ENCODE measurements at regions of chr3 and their contacts with region 1.

Region 1: DNA sequence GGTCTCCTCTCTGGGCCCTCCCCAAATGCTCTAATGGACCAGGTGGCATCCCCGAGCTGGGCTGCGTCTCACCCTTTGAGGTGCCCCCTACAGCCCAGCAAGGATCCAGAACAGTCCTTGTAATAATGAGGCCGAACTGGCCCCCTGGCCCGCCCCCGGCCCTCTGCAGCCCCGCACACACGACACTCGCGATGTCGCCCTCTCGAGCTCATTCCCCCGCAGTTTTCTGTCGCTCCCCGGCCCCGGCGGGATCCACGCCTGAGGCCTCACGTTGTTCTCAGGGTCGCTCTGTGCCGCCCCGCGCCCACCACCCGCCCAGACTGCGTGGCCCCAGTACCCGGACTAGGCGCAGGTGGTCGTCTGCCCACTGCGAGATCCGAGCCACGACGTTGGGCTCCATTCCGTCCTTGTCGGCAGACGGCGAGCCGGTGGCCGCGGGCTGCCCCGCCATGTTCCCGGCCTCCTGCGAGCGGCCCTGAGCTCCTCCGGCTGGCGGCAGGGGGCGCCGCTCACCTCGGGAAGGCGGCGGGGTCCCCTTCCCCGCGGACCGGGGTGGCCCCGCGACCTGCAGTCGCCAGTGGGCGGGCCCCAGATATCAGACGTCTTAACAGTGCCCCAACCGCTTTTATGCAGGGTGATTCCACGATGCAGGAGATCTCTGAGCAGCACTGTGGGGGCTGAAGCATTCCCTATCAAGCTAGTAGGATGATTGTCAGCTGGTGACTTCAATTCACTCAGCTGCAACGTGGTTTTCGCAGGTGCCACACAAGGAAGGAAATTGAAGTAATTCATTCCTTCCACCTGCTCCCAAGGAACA is at the start of gene C3orf33:
- DNase-seq: peak; percentile 75
- H3K4me3 Mint-ChIP-seq: peak within 1 kb of the TSS; percentile 81
- H3K27ac Mint-ChIP-seq: peak within 1 kb of the TSS; percentile 15
- H3K4me1 Mint-ChIP-seq: peaks cover 10% of the 10 kb centered on the region
- H3K27me3 Mint-ChIP-seq: peaks cover 14% of the 10 kb centered on the region
- total RNA-seq, gene C3orf33: 0.48 to 0.86 TPM

Region 2: DNA sequence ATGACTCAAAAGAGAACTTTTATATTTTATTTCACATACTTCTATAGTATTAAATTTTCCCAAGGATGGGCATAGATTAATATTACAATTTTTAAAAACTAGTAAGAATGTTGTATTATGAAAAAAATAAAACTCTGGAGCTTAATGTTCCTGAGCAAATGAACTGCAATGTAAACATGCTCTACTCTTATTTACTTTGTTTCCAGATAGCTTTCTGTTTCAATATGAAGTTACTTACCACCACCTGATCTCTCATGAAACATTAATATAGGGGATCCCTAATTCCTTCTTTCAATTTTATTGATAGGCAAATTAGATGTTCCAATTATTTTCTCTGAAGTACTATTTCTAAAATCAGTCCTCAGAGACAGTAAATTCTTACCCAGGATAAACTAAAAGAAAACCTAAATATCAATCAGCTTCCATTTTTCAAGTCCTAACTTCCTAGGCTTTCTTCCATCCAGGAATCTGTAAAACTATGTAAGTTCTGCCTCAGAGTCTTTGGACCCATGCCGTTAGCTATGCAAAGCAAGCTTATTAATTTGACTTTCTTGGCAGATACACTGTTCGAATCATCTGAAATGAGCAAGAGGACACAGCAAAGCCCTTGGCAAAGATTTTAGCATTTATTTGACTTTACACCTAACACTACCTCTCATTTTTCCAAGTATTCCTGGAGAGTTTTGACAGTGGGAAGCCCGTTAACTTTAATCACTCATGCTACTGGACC is 154.4 kb before region 1 on chr3:
- CTCF ChIA-PET with region 1: no interaction called
- POLR2A ChIA-PET with region 1: no interaction called
- DNase-seq: no peak
- H3K4me3 Mint-ChIP-seq: no peak overlapping the region
- H3K27ac Mint-ChIP-seq: no peak overlapping the region
- H3K4me1 Mint-ChIP-seq: no peaks in the 10 kb centered on the region
- H3K27me3 Mint-ChIP-seq: no peaks in the 10 kb centered on the region

Region 3: GRCh38 chr3:155766206-155766605 is 39.8 kb before region 1 on chr3:
- CTCF ChIA-PET with region 1: interaction called, 13 read pairs
- POLR2A ChIA-PET with region 1: no interaction called
- DNase-seq: no peak
- H3K4me3 Mint-ChIP-seq: no peak overlapping the region
- H3K27ac Mint-ChIP-seq: no peak overlapping the region
- H3K4me1 Mint-ChIP-seq: peaks cover 1% of the 10 kb centered on the region
- H3K27me3 Mint-ChIP-seq: no peaks in the 10 kb centered on the region

Region 4: GRCh38 chr3:155846119-155846518 is 40.1 kb after region 1 on chr3:
- CTCF ChIA-PET with region 1: interaction called, 22 read pairs
- POLR2A ChIA-PET with region 1: no interaction called
- DNase-seq: no peak
- H3K4me3 Mint-ChIP-seq: no peak overlapping the region
- H3K27ac Mint-ChIP-seq: no peak overlapping the region
- H3K4me1 Mint-ChIP-seq: peaks cover 46% of the 10 kb centered on the region
- H3K27me3 Mint-ChIP-seq: no peaks in the 10 kb centered on the region

Region 5: GRCh38 chr3:155870133-155870944 is 64.3 kb after region 1 on chr3 and contains the start of gene GMPS:
- CTCF ChIA-PET with region 1: interaction called, 91 read pairs
- POLR2A ChIA-PET with region 1: interaction called, 21 read pairs
- DNase-seq: peak; percentile 96
- H3K4me3 Mint-ChIP-seq: peak within 1 kb of the TSS; percentile 97
- H3K27ac Mint-ChIP-seq: peak within 1 kb of the TSS; percentile 91
- H3K4me1 Mint-ChIP-seq: peaks cover 31% of the 10 kb centered on the region
- H3K27me3 Mint-ChIP-seq: no peaks in the 10 kb centered on the region
- total RNA-seq, gene GMPS: 106 to 111 TPM

Region 6: GRCh38 chr3:155921486-155921885 is 115.5 kb after region 1 on chr3:
- CTCF ChIA-PET with region 1: interaction called, 17 read pairs
- POLR2A ChIA-PET with region 1: no interaction called
- DNase-seq: no peak
- H3K4me3 Mint-ChIP-seq: no peak overlapping the region
- H3K27ac Mint-ChIP-seq: no peak overlapping the region
- H3K4me1 Mint-ChIP-seq: peaks cover 3% of the 10 kb centered on the region
- H3K27me3 Mint-ChIP-seq: no peaks in the 10 kb centered on the region

Region 7: GRCh38 chr3:156071031-156071430 is 265.0 kb after region 1 on chr3:
- CTCF ChIA-PET with region 1: no interaction called
- POLR2A ChIA-PET with region 1: no interaction called
- DNase-seq: no peak
- H3K4me3 Mint-ChIP-seq: no peak overlapping the region
- H3K27ac Mint-ChIP-seq: no peak overlapping the region
- H3K4me1 Mint-ChIP-seq: no peaks in the 10 kb centered on the region
- H3K27me3 Mint-ChIP-seq: peaks cover 20% of the 10 kb centered on the region

Region 8: DNA sequence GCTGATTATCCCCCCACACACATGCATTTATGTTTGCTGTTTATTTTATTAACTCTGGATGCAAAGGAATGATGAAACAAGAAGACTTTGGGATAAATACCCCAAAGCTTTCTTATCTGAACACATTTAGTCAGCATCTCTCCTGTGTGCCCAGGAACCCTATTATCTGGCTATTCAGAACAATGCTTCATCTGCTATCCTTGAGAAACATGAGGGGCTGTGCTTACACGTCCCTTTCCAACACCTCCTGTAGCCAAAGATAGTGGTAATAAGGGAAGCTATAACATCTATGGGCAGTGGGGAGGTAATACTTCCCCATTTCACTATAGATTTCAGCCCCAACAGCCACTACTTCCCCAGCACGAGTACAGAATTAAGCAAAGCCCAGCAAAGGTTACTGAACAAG is 654.2 kb after region 1 on chr3:
- CTCF ChIA-PET with region 1: no interaction called
- POLR2A ChIA-PET with region 1: no interaction called
- DNase-seq: no peak
- H3K4me3 Mint-ChIP-seq: no peak overlapping the region
- H3K27ac Mint-ChIP-seq: no peak overlapping the region
- H3K4me1 Mint-ChIP-seq: no peaks in the 10 kb centered on the region
- H3K27me3 Mint-ChIP-seq: peaks cover 13% of the 10 kb centered on the region